Transverse colon (tissue), 4 donors: ENCODE measurements at regions of chr12 and their contacts with region 1.

Region 1: GRCh38 chr12:11486623-11487444 is 91.5 kb upstream of the PRB2 start:
- DNase-seq: peak; percentile 79
- H3K4me3 ChIP-seq: no peak overlapping the region
- H3K27ac ChIP-seq: no peak overlapping the region
- H3K4me1 ChIP-seq: no peaks in the 10 kb centered on the region
- H3K27me3 ChIP-seq: no peaks in the 10 kb centered on the region
- CTCF ChIP-seq: peak; percentile 91 to 97 (median 93)
- EP300 ChIP-seq: no peak
- POLR2A ChIP-seq: no peak

Region 2: GRCh38 chr12:10065241-10065640 is 1421.6 kb before region 1 on chr12:
- in situ Hi-C with region 1: no loop called
- intact Hi-C with region 1: no loop called
- DNase-seq: no peak
- H3K4me3 ChIP-seq: no peak overlapping the region
- H3K27ac ChIP-seq: no peak overlapping the region
- H3K4me1 ChIP-seq: peaks cover 0 to 6% (median 2%) of the 10 kb centered on the region in 4 donors
- H3K27me3 ChIP-seq: no peaks in the 10 kb centered on the region
- CTCF ChIP-seq: no peak
- EP300 ChIP-seq: no peak
- POLR2A ChIP-seq: no peak

Region 3: DNA sequence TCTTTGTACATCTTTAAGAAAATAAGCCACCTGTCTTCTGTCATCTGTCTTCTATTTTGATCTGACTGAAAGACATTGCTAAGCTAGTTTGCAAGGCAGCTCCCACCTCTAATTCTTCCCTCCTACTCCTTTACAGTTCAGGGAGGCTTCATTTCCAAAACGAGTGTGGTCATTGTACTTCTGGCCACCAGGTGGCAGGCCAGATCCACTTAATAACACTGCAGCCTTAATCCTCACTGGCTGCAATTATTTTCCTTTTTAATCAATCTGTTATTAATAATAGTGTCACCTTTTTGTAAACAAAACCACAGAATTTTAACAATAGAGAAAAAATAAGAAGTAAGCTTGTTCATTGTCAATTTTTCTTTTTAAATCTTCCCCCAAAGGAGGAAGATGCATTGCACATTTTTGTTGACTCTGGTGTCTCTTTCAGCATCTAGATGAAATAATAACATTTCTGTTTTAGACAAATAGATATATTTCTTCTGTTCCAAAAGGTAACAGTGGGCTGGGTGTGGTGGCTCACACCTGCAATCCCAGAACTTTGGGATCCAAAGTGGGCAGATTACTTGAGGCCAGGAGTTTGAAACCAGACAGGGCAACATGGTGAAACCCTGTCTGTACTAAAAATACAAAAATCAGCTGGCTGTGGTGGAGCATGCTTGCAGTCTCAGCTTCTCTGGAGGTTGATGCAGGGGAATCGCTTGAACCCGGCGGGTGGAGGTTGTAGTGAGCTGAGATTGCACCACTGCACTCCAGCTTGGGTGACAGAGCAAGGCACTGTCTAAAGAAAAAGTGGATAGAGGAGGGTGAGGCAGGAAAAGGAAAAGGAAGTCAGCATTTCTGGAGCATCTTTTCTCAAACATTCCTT is 1250.8 kb before region 1 on chr12:
- in situ Hi-C with region 1: loop called in 1 of 4 experiments (anchors 25 kb)
- intact Hi-C with region 1: no loop called
- DNase-seq: no peak
- H3K4me3 ChIP-seq: no peak overlapping the region
- H3K27ac ChIP-seq: no peak overlapping the region
- H3K4me1 ChIP-seq: no peaks in the 10 kb centered on the region
- H3K27me3 ChIP-seq: no peaks in the 10 kb centered on the region
- CTCF ChIP-seq: peak; percentile 80 to 86 (median 85)
- EP300 ChIP-seq: no peak
- POLR2A ChIP-seq: no peak

Region 4: GRCh38 chr12:10759657-10760056 is 727.2 kb before region 1 on chr12:
- in situ Hi-C with region 1: loop called in 1 of 4 experiments (anchors 10 kb)
- intact Hi-C with region 1: no loop called
- DNase-seq: no peak
- H3K4me3 ChIP-seq: no peak overlapping the region
- H3K27ac ChIP-seq: no peak overlapping the region
- H3K4me1 ChIP-seq: no peaks in the 10 kb centered on the region
- H3K27me3 ChIP-seq: peaks cover 34% of the 10 kb centered on the region
- CTCF ChIP-seq: no peak
- EP300 ChIP-seq: no peak
- POLR2A ChIP-seq: no peak

Region 5: DNA sequence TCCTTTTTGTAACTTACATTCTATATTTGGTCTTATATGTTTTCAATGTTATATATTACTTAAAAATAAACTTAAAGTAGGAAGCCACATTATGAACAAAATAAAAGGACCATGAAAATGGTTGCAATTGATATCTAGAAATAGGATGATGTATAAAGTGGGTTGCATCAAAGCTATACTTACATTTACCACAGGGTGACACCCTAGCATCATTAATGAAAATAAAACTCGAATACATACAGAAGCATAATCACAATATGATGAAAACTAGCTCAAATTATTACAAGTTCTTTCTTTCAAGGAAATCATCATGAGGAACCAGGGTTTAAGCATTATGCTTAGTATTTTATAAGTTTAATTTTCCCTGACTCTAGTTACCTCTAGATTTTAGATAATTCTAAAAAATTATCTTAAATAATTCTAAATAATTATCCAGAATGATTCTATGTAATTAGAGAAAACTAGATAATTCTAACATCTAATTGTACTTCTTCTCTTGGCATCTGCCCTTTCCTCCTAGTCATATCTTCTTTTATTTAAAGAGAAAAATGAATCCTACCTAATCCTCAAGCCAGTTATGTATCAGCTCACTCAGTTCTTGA is 715.6 kb before region 1 on chr12:
- in situ Hi-C with region 1: loop called (anchors 10 kb)
- intact Hi-C with region 1: loop called (anchors 2 kb)
- DNase-seq: no peak
- H3K4me3 ChIP-seq: no peak overlapping the region
- H3K27ac ChIP-seq: no peak overlapping the region
- H3K4me1 ChIP-seq: no peaks in the 10 kb centered on the region
- H3K27me3 ChIP-seq: peaks cover 65% of the 10 kb centered on the region
- CTCF ChIP-seq: peak; percentile 54 to 75 (median 56)
- EP300 ChIP-seq: no peak
- POLR2A ChIP-seq: no peak

Region 6: GRCh38 chr12:11228296-11228879 is 258.4 kb before region 1 on chr12:
- in situ Hi-C with region 1: loop called in 3 of 4 experiments (anchors 10 to 25 kb)
- intact Hi-C with region 1: no loop called
- DNase-seq: peak; percentile 37
- H3K4me3 ChIP-seq: no peak overlapping the region
- H3K27ac ChIP-seq: no peak overlapping the region
- H3K4me1 ChIP-seq: no peaks in the 10 kb centered on the region
- H3K27me3 ChIP-seq: no peaks in the 10 kb centered on the region
- CTCF ChIP-seq: peak; percentile 31 to 57 (median 38)
- EP300 ChIP-seq: no peak
- POLR2A ChIP-seq: no peak

Region 7: GRCh38 chr12:11238275-11238674 is 248.6 kb before region 1 on chr12:
- in situ Hi-C with region 1: loop called in 2 of 4 experiments (anchors 10 to 25 kb)
- intact Hi-C with region 1: no loop called
- DNase-seq: no peak
- H3K4me3 ChIP-seq: no peak overlapping the region
- H3K27ac ChIP-seq: no peak overlapping the region
- H3K4me1 ChIP-seq: no peaks in the 10 kb centered on the region
- H3K27me3 ChIP-seq: no peaks in the 10 kb centered on the region
- CTCF ChIP-seq: no peak
- EP300 ChIP-seq: no peak
- POLR2A ChIP-seq: no peak

Region 8: DNA sequence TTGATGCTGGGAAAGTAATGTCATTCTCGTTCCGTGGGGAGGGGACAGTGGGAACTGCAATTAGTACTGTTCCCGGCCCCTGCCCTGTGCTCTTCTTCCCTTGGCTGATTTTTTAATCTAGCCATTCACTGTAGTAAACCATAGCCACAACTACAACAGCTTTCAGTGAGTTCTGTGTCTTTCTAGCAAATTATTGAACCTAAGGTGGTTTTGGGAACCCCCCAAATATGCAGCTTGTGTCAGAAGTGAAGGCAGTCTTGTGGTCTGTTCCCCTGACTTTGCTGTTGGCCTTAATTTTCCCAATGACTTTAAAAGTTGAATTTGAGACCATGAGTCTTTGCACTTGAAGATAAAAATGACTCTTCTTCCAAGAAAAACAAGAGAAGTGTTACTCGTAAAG is 48.3 kb after region 1 on chr12:
- in situ Hi-C with region 1: no loop called
- intact Hi-C with region 1: no loop called
- DNase-seq: no peak
- H3K4me3 ChIP-seq: no peak overlapping the region
- H3K27ac ChIP-seq: no peak overlapping the region
- H3K4me1 ChIP-seq: no peaks in the 10 kb centered on the region
- H3K27me3 ChIP-seq: no peaks in the 10 kb centered on the region
- CTCF ChIP-seq: no peak
- EP300 ChIP-seq: no peak
- POLR2A ChIP-seq: no peak

Region 9: GRCh38 chr12:11545484-11546330 is 58.9 kb after region 1 on chr12:
- in situ Hi-C with region 1: no loop called
- intact Hi-C with region 1: no loop called
- DNase-seq: no peak
- H3K4me3 ChIP-seq: no peak overlapping the region
- H3K27ac ChIP-seq: peak overlapping the region in 2 of 4 donors; percentile 26 to 63
- H3K4me1 ChIP-seq: peaks cover 6 to 24% (median 7%) of the 10 kb centered on the region in 4 donors
- H3K27me3 ChIP-seq: no peaks in the 10 kb centered on the region
- CTCF ChIP-seq: no peak
- EP300 ChIP-seq: no peak
- POLR2A ChIP-seq: no peak